WTC11 (cell line): ENCODE measurements at regions of chr14 and their contacts with region 1.

Region 1: GRCh38 chr14:31026395-31027118 is 378 bp upstream of the STRN3 start:
- DNase-seq: peak; percentile 94
- ATAC-seq: peak; percentile 95
- H3K4me3 Mint-ChIP-seq: peak overlapping the region; percentile 89
- H3K27ac Mint-ChIP-seq: peak overlapping the region; percentile 99
- H3K4me1 Mint-ChIP-seq: peaks cover 39% of the 10 kb centered on the region
- H3K27me3 Mint-ChIP-seq: no peaks in the 10 kb centered on the region
- CTCF ChIP-seq: no peak

Region 2: GRCh38 chr14:30691751-30692398 is 334.7 kb before region 1 on chr14:
- CTCF ChIA-PET with region 1: no interaction called
- POLR2A ChIA-PET with region 1: no interaction called
- DNase-seq: no peak
- ATAC-seq: peak; percentile 16; the same call in 1 of the 2 replicates
- H3K4me3 Mint-ChIP-seq: peak overlapping the region; percentile 71
- H3K27ac Mint-ChIP-seq: peak overlapping the region; percentile 89
- H3K4me1 Mint-ChIP-seq: peaks cover 27% of the 10 kb centered on the region
- H3K27me3 Mint-ChIP-seq: no peaks in the 10 kb centered on the region
- CTCF ChIP-seq: no peak

Region 3: DNA sequence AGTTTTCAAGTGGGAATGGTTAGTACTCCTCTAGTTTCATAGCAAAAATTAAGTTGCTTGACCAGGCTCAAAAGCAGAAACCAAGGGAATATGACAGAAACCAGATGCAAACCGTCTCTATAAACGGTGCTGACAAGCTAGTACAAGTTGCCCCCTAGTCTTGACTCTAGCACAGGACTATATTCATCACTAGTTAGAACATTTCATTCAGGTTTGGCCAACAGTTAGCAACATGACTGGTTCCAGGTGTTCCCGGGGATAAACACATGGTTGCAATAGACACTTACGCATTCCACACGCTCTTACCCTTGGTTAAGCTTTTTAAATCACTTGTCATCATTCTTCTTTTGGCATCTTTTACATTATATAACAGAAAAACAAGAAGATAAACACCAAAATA is 300.8 kb before region 1 on chr14:
- CTCF ChIA-PET with region 1: no interaction called
- POLR2A ChIA-PET with region 1: no interaction called
- DNase-seq: no peak
- ATAC-seq: no peak
- H3K4me3 Mint-ChIP-seq: no peak overlapping the region
- H3K27ac Mint-ChIP-seq: no peak overlapping the region
- H3K4me1 Mint-ChIP-seq: 0 out of 2 replicates have a peak, but pooled peaks cover 2% of the 10 kb centered on the region
- H3K27me3 Mint-ChIP-seq: no peaks in the 10 kb centered on the region
- CTCF ChIP-seq: no peak

Region 4: GRCh38 chr14:31005556-31005955 is 21.0 kb before region 1 on chr14:
- CTCF ChIA-PET with region 1: no interaction called
- POLR2A ChIA-PET with region 1: interaction called, 12 read pairs
- DNase-seq: no peak
- ATAC-seq: no peak
- H3K4me3 Mint-ChIP-seq: no peak overlapping the region
- H3K27ac Mint-ChIP-seq: 0 out of 2 replicates have a peak overlapping the region, but pooled peaks have one; percentile 13
- H3K4me1 Mint-ChIP-seq: peaks cover 33% of the 10 kb centered on the region
- H3K27me3 Mint-ChIP-seq: no peaks in the 10 kb centered on the region
- CTCF ChIP-seq: no peak

Region 5: GRCh38 chr14:31159682-31160296 is 133.2 kb after region 1 on chr14:
- CTCF ChIA-PET with region 1: no interaction called
- POLR2A ChIA-PET with region 1: no interaction called
- DNase-seq: no peak
- ATAC-seq: no peak
- H3K4me3 Mint-ChIP-seq: no peak overlapping the region
- H3K27ac Mint-ChIP-seq: no peak overlapping the region
- H3K4me1 Mint-ChIP-seq: no peaks in the 10 kb centered on the region
- H3K27me3 Mint-ChIP-seq: no peaks in the 10 kb centered on the region
- CTCF ChIP-seq: no peak

Region 6: GRCh38 chr14:31456841-31457664 is 430.5 kb after region 1 on chr14 and contains the start of gene DTD2:
- CTCF ChIA-PET with region 1: no interaction called
- POLR2A ChIA-PET with region 1: no interaction called
- DNase-seq: peak; percentile 93
- ATAC-seq: peak; percentile 99
- H3K4me3 Mint-ChIP-seq: peak within 1 kb of the TSS; percentile 93
- H3K27ac Mint-ChIP-seq: peak within 1 kb of the TSS; percentile 96
- H3K4me1 Mint-ChIP-seq: peaks cover 21% of the 10 kb centered on the region
- H3K27me3 Mint-ChIP-seq: no peaks in the 10 kb centered on the region
- CTCF ChIP-seq: no peak
- total RNA-seq, gene DTD2: 16.7 to 18.5 TPM (median 17.9 TPM) in 3 replicates